ENCODE measurements at regions of chr9 and their contacts with region 1.

Region 1: DNA sequence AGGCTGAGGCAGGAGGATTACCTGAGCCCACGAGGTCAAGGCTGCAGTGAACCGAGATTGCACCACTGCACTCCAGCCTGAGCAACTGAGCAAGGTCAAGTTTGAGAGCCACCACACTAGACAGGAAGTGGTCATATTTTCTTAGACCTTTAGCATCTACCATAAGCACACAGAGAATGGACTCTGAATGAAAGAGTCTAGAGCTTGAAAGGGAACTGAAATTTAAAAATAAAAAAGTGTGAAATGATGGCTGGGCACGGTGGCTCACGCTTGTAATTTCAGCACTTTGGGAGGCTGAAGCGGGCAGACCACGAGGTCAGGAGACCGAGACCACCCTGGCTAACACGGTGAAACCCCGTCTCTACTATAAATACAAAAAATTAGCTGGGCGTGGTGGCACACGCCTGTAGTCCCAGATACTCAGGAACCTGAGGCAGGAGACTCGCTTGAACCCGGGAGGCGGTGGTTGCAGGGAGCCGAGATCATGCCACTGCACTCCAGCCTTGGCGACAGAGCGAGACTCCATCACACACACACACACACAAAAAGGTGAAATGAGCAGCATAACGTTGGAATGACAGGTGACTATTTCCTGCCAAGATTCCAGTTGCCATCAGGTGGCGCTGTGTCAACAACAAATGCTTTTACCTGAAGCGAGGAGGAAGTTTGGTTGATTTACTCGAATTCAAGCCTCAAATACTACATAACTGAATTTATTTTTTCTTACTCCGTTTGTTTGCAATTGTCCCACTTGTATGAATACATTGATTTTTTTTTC is 21.3 kb upstream of the AK3 start:
- DNase-seq: peak; percentile 66
- H3K4me3 ChIP-seq: no peak overlapping the region
- H3K27ac ChIP-seq: no peak overlapping the region
- H3K4me1 ChIP-seq: no peaks in the 10 kb centered on the region
- H3K27me3 ChIP-seq: no peaks in the 10 kb centered on the region
- CTCF ChIP-seq: peak; percentile 79 to 87

Region 2: GRCh38 chr9:4792572-4793458 is 30.5 kb after region 1 on chr9 and contains the start of gene RCL1:
- CTCF ChIA-PET with region 1: interaction called, 14 read pairs
- dilution Hi-C with region 1: no loop called
- in situ Hi-C with region 1: no loop called
- intact Hi-C with region 1: loop called (anchors 1 kb)
- DNase-seq: peak; percentile 97
- H3K4me3 ChIP-seq: peak within 1 kb of the TSS; percentile 62 to 97 (median 94)
- H3K27ac ChIP-seq: peak within 1 kb of the TSS; percentile 68
- H3K4me1 ChIP-seq: peaks cover 10% of the 10 kb centered on the region
- H3K27me3 ChIP-seq: no peaks in the 10 kb centered on the region
- CTCF ChIP-seq: no peak
- total RNA-seq, gene RCL1: 20.7 to 24.2 TPM

Region 3: GRCh38 chr9:4923580-4924544 is 161.6 kb after region 1 on chr9:
- CTCF ChIA-PET with region 1: no interaction called
- dilution Hi-C with region 1: no loop called
- in situ Hi-C with region 1: no loop called
- intact Hi-C with region 1: loop called (anchors 1 kb)
- DNase-seq: peak; percentile 28
- H3K4me3 ChIP-seq: no peak overlapping the region
- H3K27ac ChIP-seq: no peak overlapping the region
- H3K4me1 ChIP-seq: no peaks in the 10 kb centered on the region
- H3K27me3 ChIP-seq: no peaks in the 10 kb centered on the region
- CTCF ChIP-seq: peak; percentile 25 to 44

Region 4: GRCh38 chr9:5186416-5187169 is 424.3 kb after region 1 on chr9:
- CTCF ChIA-PET with region 1: interaction called, 3 read pairs
- dilution Hi-C with region 1: no loop called
- in situ Hi-C with region 1: no loop called
- intact Hi-C with region 1: loop called (anchors 5 kb)
- DNase-seq: peak; percentile 55
- H3K4me3 ChIP-seq: no peak overlapping the region
- H3K27ac ChIP-seq: no peak overlapping the region
- H3K4me1 ChIP-seq: no peaks in the 10 kb centered on the region
- H3K27me3 ChIP-seq: no peaks in the 10 kb centered on the region
- CTCF ChIP-seq: peak; percentile 71 to 87

Region 5: GRCh38 chr9:5582835-5583195 is 820.5 kb after region 1 on chr9:
- CTCF ChIA-PET with region 1: no interaction called
- dilution Hi-C with region 1: no loop called
- in situ Hi-C with region 1: loop called (anchors 25 kb)
- intact Hi-C with region 1: no loop called
- DNase-seq: peak; percentile 53
- H3K4me3 ChIP-seq: no peak overlapping the region
- H3K27ac ChIP-seq: no peak overlapping the region
- H3K4me1 ChIP-seq: peaks cover 28% of the 10 kb centered on the region
- H3K27me3 ChIP-seq: no peaks in the 10 kb centered on the region
- CTCF ChIP-seq: no peak